CD4-positive, alpha-beta T cell (primary cell): ENCODE measurements at regions of chr17 and their contacts with region 1.

Region 1: GRCh38 chr17:19812407-19812806 is 55.3 kb downstream of the ULK2 start:
- DNase-seq: peak in 9 of 14 experiments; percentile 5 to 45 (median 16)
- ATAC-seq: peak; percentile 57
- H3K4me3 ChIP-seq: no peak overlapping the region
- H3K4me3 Mint-ChIP-seq: no peak overlapping the region
- H3K27ac ChIP-seq: no peak overlapping the region
- H3K27ac Mint-ChIP-seq: no peak overlapping the region
- H3K4me1 ChIP-seq: no peaks in the 10 kb centered on the region
- H3K4me1 Mint-ChIP-seq: no peaks in the 10 kb centered on the region
- H3K27me3 ChIP-seq: no peaks in the 10 kb centered on the region
- H3K27me3 Mint-ChIP-seq: no peaks in the 10 kb centered on the region
- CTCF ChIP-seq: peak; percentile 28

Region 2: DNA sequence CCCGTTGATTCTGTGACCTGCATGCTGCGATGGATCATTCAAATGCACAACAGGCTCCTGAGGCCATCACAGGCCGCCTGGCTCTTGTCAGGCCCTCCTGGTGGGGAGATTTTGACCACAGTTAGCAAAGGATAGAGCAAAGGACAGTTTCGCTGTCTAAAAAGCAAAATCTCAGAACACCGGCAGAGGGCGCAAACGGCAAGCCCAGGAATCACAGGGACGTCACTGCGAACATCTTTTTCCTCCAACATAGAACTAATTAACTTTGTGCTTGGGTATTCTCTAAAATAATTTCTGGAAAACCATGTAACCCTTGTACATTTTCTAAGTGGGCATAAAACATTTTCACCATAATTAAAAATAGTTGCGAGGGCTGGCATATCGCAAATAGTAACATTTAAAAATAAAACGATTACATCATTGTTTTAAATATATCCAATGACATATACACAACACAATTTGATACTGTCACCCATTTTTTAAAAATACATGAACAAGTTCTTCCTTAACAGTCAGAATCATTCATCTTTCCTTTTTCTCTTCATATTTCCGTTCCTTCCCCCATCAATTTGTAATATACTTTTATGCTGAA is 298.4 kb before region 1 on chr17:
- CTCF ChIA-PET with region 1: no interaction called
- POLR2A ChIA-PET with region 1: no interaction called
- intact Hi-C with region 1: loop called in 1 of 2 experiments (anchors 2 kb)
- DNase-seq: peak; percentile 42 to 84 (median 62)
- ATAC-seq: peak; percentile 75
- H3K4me3 ChIP-seq: no peak overlapping the region
- H3K4me3 Mint-ChIP-seq: no peak overlapping the region
- H3K27ac ChIP-seq: no peak overlapping the region
- H3K27ac Mint-ChIP-seq: peak overlapping the region; percentile 12
- H3K4me1 ChIP-seq: peaks cover 4% of the 10 kb centered on the region
- H3K4me1 Mint-ChIP-seq: peaks cover 6% of the 10 kb centered on the region
- H3K27me3 ChIP-seq: no peaks in the 10 kb centered on the region
- H3K27me3 Mint-ChIP-seq: no peaks in the 10 kb centered on the region
- CTCF ChIP-seq: peak; percentile 94